Dendritic cell treated with granulocyte-macrophage colony-stimulating factor and Interleukin-4, amounts not matched to agents 40 ng/mL and 50 ng/mL, for 4 days (primary cell): ENCODE measurements at regions of chr6 and their contacts with region 1.

Region 1: DNA sequence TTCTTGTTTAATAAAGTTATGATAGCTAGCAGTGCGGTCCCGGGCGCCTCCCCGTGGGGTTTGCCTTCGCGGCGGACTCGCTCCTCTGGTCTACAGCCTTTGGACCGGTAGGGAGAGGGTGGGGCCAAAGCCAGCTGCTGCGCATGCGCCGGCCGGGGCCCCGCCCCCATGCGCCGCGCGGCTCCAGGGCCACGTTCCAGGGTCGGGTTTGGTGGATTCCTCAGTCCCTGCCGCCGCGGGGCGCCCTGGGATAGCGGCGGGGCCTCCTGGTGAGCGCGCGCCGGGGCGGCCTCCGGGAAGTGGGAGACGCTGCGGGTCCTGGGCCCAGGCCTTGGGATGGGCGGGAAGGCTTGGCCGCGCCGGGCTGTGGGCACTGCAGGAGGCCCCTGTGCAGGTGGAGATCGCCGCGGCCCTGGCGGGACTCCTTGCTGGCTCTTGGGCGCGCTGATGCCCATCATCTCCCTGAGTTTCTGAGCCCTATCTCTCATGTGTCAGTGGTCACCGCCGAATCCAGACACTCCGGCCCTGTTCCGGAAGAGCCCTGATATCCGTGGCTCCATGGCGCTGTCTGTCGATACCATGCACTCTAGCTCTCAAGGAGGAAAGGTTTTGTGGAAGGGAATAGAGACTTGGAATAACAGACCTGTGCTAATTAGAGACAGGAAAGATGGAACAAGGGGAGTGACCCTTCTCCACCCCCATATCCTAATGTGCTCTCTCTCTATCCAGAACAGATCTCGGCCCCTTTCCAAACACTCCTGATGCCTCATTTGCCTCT is at the start of gene VARS2:
- H3K4me3 Mint-ChIP-seq: peak within 1 kb of the TSS; percentile 81
- H3K27ac Mint-ChIP-seq: peak within 1 kb of the TSS; percentile 78
- H3K4me1 Mint-ChIP-seq: peaks cover 26% of the 10 kb centered on the region
- H3K27me3 Mint-ChIP-seq: no peaks in the 10 kb centered on the region

Region 2: DNA sequence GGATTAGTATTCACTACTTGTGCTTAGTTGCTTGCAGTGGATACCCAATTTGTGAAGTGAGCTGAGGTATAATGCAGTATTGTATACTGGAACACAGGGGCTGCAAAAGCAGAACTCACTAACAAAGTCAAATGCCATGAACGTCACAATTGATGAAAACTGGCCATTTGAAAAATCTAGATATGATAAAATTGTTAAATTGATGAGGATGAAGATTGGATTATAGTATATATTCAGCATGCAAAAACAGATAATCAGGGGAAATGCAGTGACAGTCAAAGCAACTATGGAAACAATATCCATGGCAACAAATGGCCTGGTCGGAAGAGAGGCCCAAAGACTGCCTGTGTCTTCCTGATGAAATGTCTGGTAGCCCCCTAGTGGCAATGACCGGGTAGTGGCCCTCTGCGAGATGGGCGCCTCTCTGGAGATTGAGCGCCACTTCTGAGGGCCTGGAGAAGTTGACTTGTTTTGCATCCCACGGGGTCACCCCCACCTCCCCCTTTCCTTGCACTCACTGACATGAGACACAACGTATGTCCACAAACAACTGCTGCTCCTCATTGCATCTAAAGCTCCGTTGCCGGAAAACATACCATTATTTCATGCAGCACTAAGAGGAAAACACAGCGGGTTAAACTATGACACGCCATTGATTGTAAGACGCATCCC is 154.5 kb after region 1 on chr6:
- intact Hi-C with region 1: loop called (anchors 1 kb)
- H3K4me3 Mint-ChIP-seq: no peak overlapping the region
- H3K27ac Mint-ChIP-seq: no peak overlapping the region
- H3K4me1 Mint-ChIP-seq: no peaks in the 10 kb centered on the region
- H3K27me3 Mint-ChIP-seq: peaks cover 5% of the 10 kb centered on the region

Region 3: DNA sequence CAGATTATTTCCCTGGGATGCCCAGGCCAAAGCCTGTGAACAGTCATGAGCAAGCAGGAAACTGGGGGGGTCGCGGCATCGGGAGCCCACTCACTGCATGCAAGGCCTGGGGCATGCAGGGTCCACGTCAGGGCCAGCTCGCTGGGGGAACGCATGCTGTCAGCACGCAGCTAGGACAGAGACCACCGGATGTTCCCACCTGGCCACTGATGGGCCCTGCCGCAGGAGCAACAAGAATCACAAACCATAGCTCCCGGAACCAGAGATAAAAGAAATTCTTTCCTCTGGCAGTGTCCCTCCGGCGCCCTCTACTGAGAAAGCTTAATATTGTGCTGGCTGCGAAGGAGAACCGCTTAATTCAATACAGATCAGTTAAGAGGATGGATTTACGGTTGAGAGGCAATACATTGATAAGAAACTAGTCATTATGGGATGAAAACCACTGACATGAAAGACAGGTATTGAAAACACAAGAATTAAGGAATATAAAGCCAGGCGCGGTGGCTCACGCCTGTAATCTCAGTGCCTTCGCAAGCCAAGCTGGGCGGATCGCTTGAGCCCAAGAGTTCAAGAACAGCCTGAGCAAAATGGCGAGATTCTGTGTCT is 165.5 kb after region 1 on chr6:
- intact Hi-C with region 1: loop called (anchors 2 kb)
- H3K4me3 Mint-ChIP-seq: no peak overlapping the region
- H3K27ac Mint-ChIP-seq: no peak overlapping the region
- H3K4me1 Mint-ChIP-seq: peaks cover 6% of the 10 kb centered on the region
- H3K27me3 Mint-ChIP-seq: peaks cover 21% of the 10 kb centered on the region